ENCODE measurements at regions of chr17 and their contacts with region 1.

Region 1: DNA sequence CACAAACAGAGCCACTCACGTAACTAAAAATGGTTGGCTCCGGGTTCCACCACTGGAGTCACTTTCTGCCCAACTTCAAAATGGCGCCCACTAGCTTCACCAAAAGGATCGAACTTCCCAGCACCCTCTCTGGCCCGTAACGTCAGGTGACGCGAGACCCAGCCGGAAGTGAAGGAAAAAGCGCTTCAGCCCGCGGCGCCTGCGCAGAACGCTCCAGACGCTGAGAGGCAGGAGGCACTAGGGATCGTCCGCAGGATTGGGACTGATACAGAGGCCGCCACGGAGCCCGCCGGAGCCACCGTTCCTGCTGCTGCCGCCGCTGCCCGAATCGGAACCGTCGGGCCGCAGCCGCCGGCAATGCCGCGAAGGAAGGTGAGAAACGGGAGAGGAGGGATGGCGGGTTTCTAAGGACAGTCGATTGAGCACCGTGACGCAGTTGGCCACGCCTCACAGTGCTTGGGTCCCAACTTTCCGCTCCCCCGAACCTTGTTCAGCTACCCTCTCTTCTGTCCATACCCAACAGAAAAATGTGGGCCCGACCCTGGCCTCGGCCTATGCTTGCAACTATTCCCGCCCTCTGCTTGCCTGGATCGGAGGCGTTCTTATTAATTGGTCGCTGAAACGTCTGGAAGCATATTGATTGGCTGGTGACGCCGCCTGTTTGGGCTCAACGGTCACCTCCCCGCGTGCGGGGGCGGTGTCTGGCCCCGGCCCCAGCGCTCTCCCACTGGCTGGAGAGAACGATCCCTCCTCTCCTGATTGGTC is at the start of gene KAT7:
- DNase-seq: peak; percentile 99
- H3K4me3 Mint-ChIP-seq: peak within 1 kb of the TSS; percentile 94
- H3K27ac Mint-ChIP-seq: peak within 1 kb of the TSS; percentile 99
- H3K4me1 Mint-ChIP-seq: peaks cover 35% of the 10 kb centered on the region
- H3K27me3 Mint-ChIP-seq: no peaks in the 10 kb centered on the region
- total RNA-seq, gene KAT7: 68.5 and 71.1 TPM in 2 replicates

Region 2: DNA sequence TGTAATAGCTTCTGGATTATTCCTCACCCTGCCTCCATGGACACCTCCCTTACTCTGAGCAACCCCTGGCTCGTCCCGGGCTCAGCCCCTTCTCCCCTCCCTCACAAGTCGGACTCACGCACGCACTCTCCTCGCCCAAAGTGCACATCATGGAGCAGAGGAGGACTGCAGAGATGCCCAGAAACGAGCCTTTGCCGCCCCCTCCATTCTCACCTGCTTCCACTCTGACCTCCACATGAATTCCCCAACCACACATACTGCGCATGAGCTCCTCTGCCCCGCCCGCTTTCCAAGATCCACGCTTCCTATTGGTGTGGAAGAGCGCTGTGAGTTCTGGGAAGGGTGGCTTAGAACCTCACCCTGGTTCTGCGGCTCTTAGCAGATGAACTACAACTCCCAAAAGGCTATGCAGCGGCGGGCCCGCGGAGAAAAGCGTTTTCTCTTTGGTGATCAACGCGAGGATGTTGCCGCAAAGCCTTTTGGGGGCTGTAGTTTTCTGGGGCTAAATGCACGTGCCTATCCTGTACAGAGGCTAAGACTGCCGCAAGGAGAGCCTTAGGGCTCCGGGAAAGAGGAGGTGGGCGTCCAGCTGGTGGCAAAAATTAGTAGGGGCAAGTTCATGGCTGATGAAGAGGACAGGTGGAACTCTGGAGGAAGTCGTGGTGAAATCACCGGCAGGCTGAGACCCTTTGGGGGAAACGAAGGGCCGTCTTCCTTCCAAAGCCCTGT is 373.9 kb before region 1 on chr17 and contains the start of gene PHB1:
- intact Hi-C with region 1: loop called (anchors 1 kb)
- DNase-seq: peak; percentile 93
- H3K4me3 Mint-ChIP-seq: peak within 1 kb of the TSS; percentile 98
- H3K27ac Mint-ChIP-seq: peak within 1 kb of the TSS; percentile 95
- H3K4me1 Mint-ChIP-seq: peaks cover 9% of the 10 kb centered on the region
- H3K27me3 Mint-ChIP-seq: peaks cover 3% of the 10 kb centered on the region
- total RNA-seq, gene PHB1: 395 and 401 TPM in 2 replicates

Region 3: DNA sequence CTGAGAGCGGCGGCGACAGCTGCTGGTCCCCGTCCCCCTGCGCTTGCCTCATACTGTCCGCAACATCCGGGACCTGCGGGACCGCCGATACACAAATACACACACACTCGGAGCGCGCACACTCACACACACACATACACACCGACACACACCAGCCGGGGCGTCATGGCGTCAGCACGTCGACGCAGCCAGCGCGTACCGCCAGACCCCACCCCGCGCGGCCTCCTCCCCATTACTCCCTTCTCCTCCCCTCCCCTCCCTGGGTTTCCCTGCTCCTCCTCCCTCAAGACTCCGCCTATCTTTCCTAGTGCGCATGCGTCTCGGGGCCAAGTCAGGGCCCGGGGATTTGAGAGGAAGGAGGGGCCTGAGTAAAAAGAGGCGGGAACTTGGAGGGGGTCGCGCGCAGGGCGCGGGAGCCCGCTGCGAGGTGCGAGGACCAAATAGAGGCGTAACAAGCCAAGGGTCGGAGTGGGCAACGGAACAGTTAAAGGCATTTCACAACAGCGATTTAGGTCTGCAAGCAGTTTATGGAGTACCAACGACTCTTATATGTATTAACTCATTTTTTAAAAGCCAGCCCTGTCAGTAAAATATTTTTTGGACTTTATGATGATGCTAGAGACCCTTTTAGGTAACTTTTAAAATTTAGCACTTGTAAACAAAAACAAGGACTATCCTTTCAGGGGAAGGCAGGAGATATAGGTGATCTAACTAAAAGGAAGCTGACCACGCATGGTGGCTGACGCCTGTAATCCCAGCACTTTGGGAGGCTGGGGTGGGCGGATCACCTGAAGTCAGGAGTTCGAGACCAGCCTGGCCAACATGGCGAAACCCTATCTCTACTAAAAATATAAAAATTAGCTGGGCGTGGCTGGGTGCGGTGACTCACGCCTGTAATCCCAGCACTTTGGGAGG is 110.5 kb before region 1 on chr17 and contains the start of gene SPOP:
- intact Hi-C with region 1: loop called (anchors 1 kb)
- DNase-seq: peak; percentile 99
- H3K4me3 Mint-ChIP-seq: peak within 1 kb of the TSS; percentile 91
- H3K27ac Mint-ChIP-seq: peak within 1 kb of the TSS; percentile 99
- H3K4me1 Mint-ChIP-seq: peaks cover 41% of the 10 kb centered on the region
- H3K27me3 Mint-ChIP-seq: peaks cover 5% of the 10 kb centered on the region
- total RNA-seq, gene SPOP: 58.3 and 61.9 TPM in 2 replicates

Region 4: DNA sequence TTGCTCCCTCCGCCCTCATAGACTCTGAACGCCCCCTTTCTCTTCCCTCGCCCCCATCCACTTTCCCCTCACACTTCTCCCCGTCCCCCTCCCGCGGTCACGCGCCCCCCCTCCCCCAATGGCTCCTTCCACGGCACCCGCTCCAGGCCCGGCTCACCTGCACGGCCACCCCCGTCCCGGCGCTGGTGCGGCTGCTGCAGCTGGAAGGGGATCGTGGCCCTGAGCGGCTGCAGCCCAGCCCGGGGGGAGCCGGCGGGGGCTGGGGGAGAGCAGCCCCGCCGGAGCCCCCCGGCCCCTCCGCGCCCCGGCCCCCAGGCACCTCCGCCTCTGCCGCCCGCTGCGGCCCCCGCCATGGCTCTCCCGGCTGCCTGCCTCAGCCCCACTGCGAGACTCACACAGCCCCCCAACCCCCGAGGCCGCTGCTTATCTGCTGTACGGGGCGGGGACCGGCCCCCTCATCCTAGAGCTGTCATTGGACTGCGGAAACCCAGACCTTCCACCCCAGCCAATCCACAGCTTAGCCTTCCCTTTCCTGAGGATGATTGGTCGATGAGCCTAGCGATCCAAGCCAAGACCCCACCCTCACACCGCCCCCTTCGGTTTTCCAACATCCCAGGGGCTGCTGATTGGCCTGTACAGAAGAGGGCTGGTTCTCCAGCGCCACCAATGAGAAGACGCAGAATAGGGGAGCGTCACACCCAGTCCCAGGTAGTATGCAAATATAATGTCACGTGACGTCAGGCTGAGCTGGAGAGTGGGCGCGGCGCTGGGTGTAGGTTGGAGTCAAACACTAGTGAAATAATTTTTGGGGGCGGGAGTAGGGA is 24.7 kb before region 1 on chr17 and contains the start of gene FAM117A:
- intact Hi-C with region 1: loop called (anchors 1 kb)
- DNase-seq: peak; percentile 95
- H3K4me3 Mint-ChIP-seq: peak within 1 kb of the TSS; percentile 96
- H3K27ac Mint-ChIP-seq: peak within 1 kb of the TSS; percentile 90
- H3K4me1 Mint-ChIP-seq: peaks cover 54% of the 10 kb centered on the region
- H3K27me3 Mint-ChIP-seq: peaks cover 25% of the 10 kb centered on the region
- total RNA-seq, gene FAM117A: 13.9 and 14.8 TPM in 2 replicates

Region 5: DNA sequence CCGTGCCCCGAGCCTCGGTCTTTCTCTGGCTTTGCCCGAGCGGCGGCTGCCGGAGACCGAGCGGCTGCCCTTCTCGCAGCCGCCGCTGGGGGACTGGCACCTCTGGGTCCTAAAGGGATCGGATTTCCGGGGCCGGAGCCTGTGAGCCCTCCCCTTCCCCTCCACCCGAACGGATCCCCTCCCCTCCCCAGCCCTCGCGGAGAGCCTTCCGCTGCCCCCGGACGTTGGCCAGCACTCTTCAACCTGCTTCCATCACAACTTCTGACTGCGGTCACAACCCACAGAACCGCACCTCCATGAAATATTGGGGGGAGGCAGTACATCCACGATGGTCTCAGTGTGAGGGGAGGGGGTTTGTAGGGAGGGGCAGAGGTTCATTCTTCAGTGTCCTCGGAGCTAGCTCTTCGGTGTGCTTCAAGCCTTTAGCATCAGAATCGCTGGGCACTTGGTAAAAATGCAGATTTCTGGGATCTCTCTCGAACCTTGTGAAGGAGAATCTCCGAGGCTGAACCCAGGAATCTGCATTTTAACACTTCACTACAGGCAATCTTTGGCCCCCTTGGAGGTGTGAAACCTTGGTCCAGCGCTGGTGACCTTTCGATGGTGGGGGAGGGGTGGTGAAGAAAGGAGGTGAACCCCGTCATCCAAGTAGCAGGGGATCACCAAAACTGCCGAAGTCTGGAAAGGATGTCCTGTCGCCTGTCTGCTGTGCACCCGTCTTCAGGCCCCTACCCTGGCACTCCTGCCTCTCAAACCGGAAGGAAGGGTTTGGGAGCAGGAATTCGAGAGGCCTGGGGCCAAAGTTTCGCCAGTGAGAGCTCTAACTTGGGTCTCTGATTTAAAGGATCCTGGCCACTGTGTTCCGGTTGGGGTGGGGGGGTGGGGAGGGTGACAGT is 362.6 kb after region 1 on chr17:
- intact Hi-C with region 1: loop called (anchors 2 kb)
- DNase-seq: peak; percentile 86
- H3K4me3 Mint-ChIP-seq: peak overlapping the region; percentile 92
- H3K27ac Mint-ChIP-seq: peak overlapping the region; percentile 95
- H3K4me1 Mint-ChIP-seq: peaks cover 41% of the 10 kb centered on the region
- H3K27me3 Mint-ChIP-seq: no peaks in the 10 kb centered on the region

Measured in activated T-helper 1 cell treated with anti-CD3 and anti-CD28 coated beads, Interleukin-12 subunit alpha, Interleukin-12 subunit beta, Interleukin-2, Interleukin-4 antibody, amounts not matched to agents 30 ng/mL and 10 ng/mL and 1 ng/mL, durations not matched to agents 14 hours and 24 hours and 36 hours (primary cell).